ENCODE measurements at regions of chr7 and their contacts with region 1.

Region 1: GRCh38 chr7:30284298-30285066 is at the start of gene ZNRF2:
- DNase-seq: peak; percentile 99 to 100
- H3K4me3 ChIP-seq: peak within 1 kb of the TSS; percentile 92 to 96
- H3K27ac ChIP-seq: peak within 1 kb of the TSS; percentile 98
- H3K4me1 ChIP-seq: peaks cover 0 to 31% (median 16%) of the 10 kb centered on the region in 4 donors
- H3K27me3 ChIP-seq: peaks cover 0 to 3% of the 10 kb centered on the region in 2 donors
- CTCF ChIP-seq: peak; percentile 41 to 51

Region 2: GRCh38 chr7:30134611-30135545 is 149.6 kb before region 1 on chr7 and contains the start of gene MTURN:
- intact Hi-C with region 1: loop called (anchors 10 kb)
- DNase-seq: peak; percentile 80 to 92
- H3K4me3 ChIP-seq: peak within 1 kb of the TSS; percentile 90 to 91
- H3K27ac ChIP-seq: peak within 1 kb of the TSS; percentile 92 to 95
- H3K4me1 ChIP-seq: peaks cover 0 to 44% (median 26%) of the 10 kb centered on the region in 4 donors
- H3K27me3 ChIP-seq: no peaks in the 10 kb centered on the region
- CTCF ChIP-seq: peak in 1 of 2 experiments; percentile 12

Region 3: GRCh38 chr7:30308389-30308788 is 23.9 kb after region 1 on chr7:
- intact Hi-C with region 1: no loop called
- DNase-seq: no peak
- H3K4me3 ChIP-seq: no peak overlapping the region
- H3K27ac ChIP-seq: no peak overlapping the region
- H3K4me1 ChIP-seq: peaks cover 0 to 26% (median 9%) of the 10 kb centered on the region in 4 donors
- H3K27me3 ChIP-seq: no peaks in the 10 kb centered on the region
- CTCF ChIP-seq: no peak

Region 4: GRCh38 chr7:30412810-30413504 is 128.5 kb after region 1 on chr7:
- intact Hi-C with region 1: loop called (anchors 5 kb)
- DNase-seq: peak in 1 of 2 donors; percentile 35
- H3K4me3 ChIP-seq: no peak overlapping the region
- H3K27ac ChIP-seq: no peak overlapping the region
- H3K4me1 ChIP-seq: no peaks in the 10 kb centered on the region
- H3K27me3 ChIP-seq: no peaks in the 10 kb centered on the region
- CTCF ChIP-seq: peak; percentile 57 to 64

Measured in tibial artery (tissue), 4 donors.